CD8-positive, alpha-beta T cell (primary cell): ENCODE measurements at regions of chr9 and their contacts with region 1.

Region 1: DNA sequence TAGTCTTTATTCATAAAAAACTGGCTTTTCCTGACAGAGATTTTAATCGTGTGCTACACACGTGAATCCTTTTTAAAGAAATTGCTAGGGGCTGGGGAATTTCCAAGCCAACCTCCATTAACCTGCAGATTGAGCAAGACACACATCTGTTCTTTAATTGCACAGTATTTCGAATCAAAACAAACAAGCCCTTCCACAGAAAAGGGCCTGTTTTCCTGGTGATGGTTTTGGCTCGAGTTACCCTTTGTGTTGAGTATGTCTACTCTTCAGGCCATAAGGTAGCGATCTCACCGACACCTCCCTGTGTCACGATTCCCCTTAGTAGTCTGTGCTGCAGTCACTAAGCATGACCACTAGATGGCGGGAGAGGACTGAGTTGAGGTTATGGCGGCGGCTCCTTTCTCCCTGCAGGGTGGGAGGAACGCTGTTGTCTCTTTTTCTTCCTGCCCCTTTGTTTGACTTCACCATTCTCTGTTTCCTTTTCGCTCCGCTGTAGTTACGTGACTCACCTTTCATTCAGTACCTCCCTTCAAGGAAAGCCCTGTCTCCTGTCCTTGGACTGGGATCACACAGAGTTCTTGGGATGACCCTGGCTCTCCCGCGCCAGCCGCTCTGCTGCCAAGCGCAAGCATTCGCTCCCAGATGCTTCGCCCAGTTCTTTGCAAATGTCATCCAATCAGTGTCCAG is 137.1 kb upstream of the SLC24A2 start:
- DNase-seq: peak; percentile 61 to 87 (median 78)
- ATAC-seq: peak; percentile 100
- H3K4me3 ChIP-seq: peak overlapping the region in 1 of 2 experiments; percentile 26
- H3K4me3 Mint-ChIP-seq: peak overlapping the region; percentile 59
- H3K27ac ChIP-seq: no peak overlapping the region
- H3K27ac Mint-ChIP-seq: no peak overlapping the region
- H3K4me1 ChIP-seq: peaks cover 4% of the 10 kb centered on the region
- H3K4me1 Mint-ChIP-seq: peaks cover 8% of the 10 kb centered on the region
- H3K27me3 ChIP-seq: no peaks in the 10 kb centered on the region
- H3K27me3 Mint-ChIP-seq: peaks cover 9% of the 10 kb centered on the region
- CTCF ChIP-seq: peak; percentile 87

Region 2: DNA sequence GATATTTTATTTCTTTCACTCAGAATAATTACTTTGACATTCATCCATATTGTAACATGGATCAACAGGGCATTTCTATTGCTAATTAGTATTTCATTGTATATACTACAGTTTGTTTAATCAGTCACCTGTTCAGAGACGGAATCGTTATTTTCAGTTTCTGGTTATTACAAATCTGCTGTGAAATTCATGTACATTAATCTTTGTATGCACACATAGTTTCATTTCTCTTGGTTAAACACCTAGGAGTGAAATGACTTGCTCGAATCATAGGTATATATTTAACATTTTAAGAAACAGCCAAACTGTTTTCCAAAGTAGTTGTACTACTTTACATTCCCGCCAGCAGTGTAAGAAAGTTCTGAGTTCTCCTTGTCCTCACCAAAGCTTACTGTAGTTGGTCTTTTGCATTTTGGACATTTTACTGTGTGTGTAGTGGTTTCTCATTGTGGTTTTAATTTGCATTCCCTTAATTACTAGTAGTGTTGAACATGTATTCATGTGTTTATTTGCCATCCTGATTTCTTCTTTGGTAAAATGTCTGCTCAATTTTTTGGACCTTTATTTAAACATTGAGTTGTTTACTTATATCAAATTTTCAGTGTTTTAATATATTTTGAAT is 1091.1 kb before region 1 on chr9:
- CTCF ChIA-PET with region 1: no interaction called
- POLR2A ChIA-PET with region 1: no interaction called
- intact Hi-C with region 1: no loop called
- DNase-seq: no peak
- ATAC-seq: no peak
- H3K4me3 ChIP-seq: no peak overlapping the region
- H3K4me3 Mint-ChIP-seq: no peak overlapping the region
- H3K27ac ChIP-seq: no peak overlapping the region
- H3K27ac Mint-ChIP-seq: no peak overlapping the region
- H3K4me1 ChIP-seq: no peaks in the 10 kb centered on the region
- H3K4me1 Mint-ChIP-seq: no peaks in the 10 kb centered on the region
- H3K27me3 ChIP-seq: no peaks in the 10 kb centered on the region
- H3K27me3 Mint-ChIP-seq: no peaks in the 10 kb centered on the region
- CTCF ChIP-seq: no peak

Region 3: DNA sequence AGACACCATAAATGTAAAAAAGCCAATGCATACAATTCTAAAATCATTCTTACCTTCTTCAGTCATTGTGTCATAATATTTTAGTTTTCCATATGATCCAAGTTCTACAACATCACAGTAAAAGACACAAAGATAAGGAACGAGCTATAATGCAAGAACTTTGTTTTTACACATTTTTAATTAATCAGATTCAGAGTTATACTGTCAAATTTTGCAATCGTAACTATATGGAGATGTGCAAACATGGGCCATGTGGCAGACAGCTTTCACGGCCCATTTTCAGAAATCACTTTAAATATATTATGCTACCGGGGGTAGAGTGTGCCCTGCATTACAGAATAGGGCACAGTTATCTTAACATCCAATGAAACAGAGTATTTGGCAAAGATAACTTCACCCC is 328.8 kb before region 1 on chr9:
- CTCF ChIA-PET with region 1: no interaction called
- POLR2A ChIA-PET with region 1: no interaction called
- intact Hi-C with region 1: no loop called
- DNase-seq: no peak
- ATAC-seq: no peak
- H3K4me3 ChIP-seq: no peak overlapping the region
- H3K4me3 Mint-ChIP-seq: no peak overlapping the region
- H3K27ac ChIP-seq: no peak overlapping the region
- H3K27ac Mint-ChIP-seq: no peak overlapping the region
- H3K4me1 ChIP-seq: no peaks in the 10 kb centered on the region
- H3K4me1 Mint-ChIP-seq: no peaks in the 10 kb centered on the region
- H3K27me3 ChIP-seq: no peaks in the 10 kb centered on the region
- H3K27me3 Mint-ChIP-seq: peaks cover 16% of the 10 kb centered on the region
- CTCF ChIP-seq: no peak

Region 4: DNA sequence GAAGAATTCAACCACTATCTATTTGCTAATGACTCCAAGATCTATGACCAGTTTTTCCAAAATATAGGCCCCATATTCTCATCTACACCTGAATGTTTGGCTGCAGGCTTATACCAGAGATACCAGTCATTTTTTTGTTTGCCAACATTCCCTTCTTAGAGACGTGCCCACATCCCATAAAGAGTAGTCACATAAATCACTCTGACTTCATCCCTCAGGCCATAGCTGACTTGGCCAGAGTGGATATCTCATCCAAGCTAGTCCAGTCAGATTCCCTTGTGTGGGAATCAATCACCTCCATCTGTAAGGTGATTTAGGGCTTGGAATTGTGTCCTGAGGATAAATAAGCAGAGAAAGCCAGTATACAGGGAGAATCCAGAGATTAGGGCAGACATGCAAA is 12.8 kb before region 1 on chr9:
- CTCF ChIA-PET with region 1: no interaction called
- POLR2A ChIA-PET with region 1: no interaction called
- intact Hi-C with region 1: no loop called
- DNase-seq: no peak
- ATAC-seq: no peak
- H3K4me3 ChIP-seq: no peak overlapping the region
- H3K4me3 Mint-ChIP-seq: no peak overlapping the region
- H3K27ac ChIP-seq: no peak overlapping the region
- H3K27ac Mint-ChIP-seq: no peak overlapping the region
- H3K4me1 ChIP-seq: no peaks in the 10 kb centered on the region
- H3K4me1 Mint-ChIP-seq: no peaks in the 10 kb centered on the region
- H3K27me3 ChIP-seq: no peaks in the 10 kb centered on the region
- H3K27me3 Mint-ChIP-seq: no peaks in the 10 kb centered on the region
- CTCF ChIP-seq: no peak

Region 5: GRCh38 chr9:20242510-20243189 is 316.7 kb after region 1 on chr9:
- CTCF ChIA-PET with region 1: interaction called, 3 read pairs
- POLR2A ChIA-PET with region 1: no interaction called
- intact Hi-C with region 1: loop called in 1 of 2 experiments (anchors 10 kb)
- DNase-seq: peak in 7 of 9 experiments; percentile 8 to 74 (median 20)
- ATAC-seq: peak; percentile 75
- H3K4me3 ChIP-seq: peak overlapping the region in 1 of 2 experiments; percentile 22
- H3K4me3 Mint-ChIP-seq: peak overlapping the region; percentile 71
- H3K27ac ChIP-seq: peak overlapping the region in 1 of 2 experiments; percentile 50
- H3K27ac Mint-ChIP-seq: peak overlapping the region; percentile 60
- H3K4me1 ChIP-seq: peaks cover 35% of the 10 kb centered on the region
- H3K4me1 Mint-ChIP-seq: peaks cover 57% of the 10 kb centered on the region
- H3K27me3 ChIP-seq: no peaks in the 10 kb centered on the region
- H3K27me3 Mint-ChIP-seq: no peaks in the 10 kb centered on the region
- CTCF ChIP-seq: no peak

Region 6: GRCh38 chr9:20361656-20362570 is 436.0 kb after region 1 on chr9:
- CTCF ChIA-PET with region 1: interaction called, 3 read pairs
- POLR2A ChIA-PET with region 1: no interaction called
- intact Hi-C with region 1: loop called in 1 of 2 experiments (anchors 5 kb)
- DNase-seq: no peak
- ATAC-seq: peak; percentile 64
- H3K4me3 ChIP-seq: no peak overlapping the region
- H3K4me3 Mint-ChIP-seq: peak overlapping the region; percentile 23
- H3K27ac ChIP-seq: no peak overlapping the region
- H3K27ac Mint-ChIP-seq: peak overlapping the region; percentile 23
- H3K4me1 ChIP-seq: peaks cover 13% of the 10 kb centered on the region
- H3K4me1 Mint-ChIP-seq: peaks cover 46% of the 10 kb centered on the region
- H3K27me3 ChIP-seq: no peaks in the 10 kb centered on the region
- H3K27me3 Mint-ChIP-seq: no peaks in the 10 kb centered on the region
- CTCF ChIP-seq: no peak

Region 7: GRCh38 chr9:20558566-20559016 is 632.6 kb after region 1 on chr9:
- CTCF ChIA-PET with region 1: no interaction called
- POLR2A ChIA-PET with region 1: no interaction called
- intact Hi-C with region 1: loop called in 1 of 2 experiments (anchors 10 kb)
- DNase-seq: no peak
- ATAC-seq: peak; percentile 23
- H3K4me3 ChIP-seq: no peak overlapping the region
- H3K4me3 Mint-ChIP-seq: no peak overlapping the region
- H3K27ac ChIP-seq: no peak overlapping the region
- H3K27ac Mint-ChIP-seq: no peak overlapping the region
- H3K4me1 ChIP-seq: peaks cover 48% of the 10 kb centered on the region
- H3K4me1 Mint-ChIP-seq: peaks cover 88% of the 10 kb centered on the region
- H3K27me3 ChIP-seq: no peaks in the 10 kb centered on the region
- H3K27me3 Mint-ChIP-seq: no peaks in the 10 kb centered on the region
- CTCF ChIP-seq: no peak

Region 8: DNA sequence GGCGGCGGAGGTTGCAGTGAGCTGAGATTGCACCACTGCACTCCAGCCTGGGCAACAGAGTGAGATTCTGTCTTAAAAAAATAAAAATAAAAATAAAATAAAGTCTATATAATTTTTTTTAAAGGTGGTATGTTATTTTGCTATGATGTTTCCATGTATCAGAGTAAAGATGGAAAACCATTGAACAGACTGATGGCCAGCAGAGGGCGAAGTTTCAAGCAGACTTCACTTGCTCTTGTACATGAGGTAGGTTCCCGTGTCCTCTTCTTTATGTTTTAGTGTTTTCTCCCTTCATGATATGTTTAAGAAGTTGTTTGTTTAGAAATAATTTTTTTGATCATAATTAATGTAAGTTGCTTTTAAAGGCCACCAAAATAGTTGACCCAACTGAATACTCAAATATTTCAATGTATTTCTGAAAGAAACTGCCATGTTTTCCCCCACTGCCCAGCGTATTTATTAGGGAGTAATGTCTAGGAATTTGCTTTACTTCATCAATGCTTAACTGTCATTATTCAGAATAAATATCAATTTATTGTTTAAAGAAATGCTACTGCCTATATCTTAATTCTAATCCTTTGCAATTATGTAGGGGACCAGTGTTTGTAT is 959.1 kb after region 1 on chr9:
- CTCF ChIA-PET with region 1: interaction called, 4 read pairs
- POLR2A ChIA-PET with region 1: no interaction called
- intact Hi-C with region 1: loop called (anchors 2 to 5 kb)
- DNase-seq: peak; percentile 37 to 72 (median 58)
- ATAC-seq: peak; percentile 44
- H3K4me3 ChIP-seq: no peak overlapping the region
- H3K4me3 Mint-ChIP-seq: no peak overlapping the region
- H3K27ac ChIP-seq: no peak overlapping the region
- H3K27ac Mint-ChIP-seq: no peak overlapping the region
- H3K4me1 ChIP-seq: no peaks in the 10 kb centered on the region
- H3K4me1 Mint-ChIP-seq: no peaks in the 10 kb centered on the region
- H3K27me3 ChIP-seq: no peaks in the 10 kb centered on the region
- H3K27me3 Mint-ChIP-seq: no peaks in the 10 kb centered on the region
- CTCF ChIP-seq: peak; percentile 76

Region 9: GRCh38 chr9:21395778-21396717 is 1470.1 kb after region 1 on chr9:
- CTCF ChIA-PET with region 1: no interaction called
- POLR2A ChIA-PET with region 1: no interaction called
- intact Hi-C with region 1: loop called in 1 of 2 experiments (anchors 10 kb)
- DNase-seq: peak; percentile 26 to 79 (median 65)
- ATAC-seq: peak; percentile 74
- H3K4me3 ChIP-seq: peak overlapping the region; percentile 40 to 52
- H3K4me3 Mint-ChIP-seq: peak overlapping the region; percentile 65
- H3K27ac ChIP-seq: no peak overlapping the region
- H3K27ac Mint-ChIP-seq: no peak overlapping the region
- H3K4me1 ChIP-seq: peaks cover 4% of the 10 kb centered on the region
- H3K4me1 Mint-ChIP-seq: peaks cover 5% of the 10 kb centered on the region
- H3K27me3 ChIP-seq: peaks cover 5 to 7% of the 10 kb centered on the region in 2 experiments
- H3K27me3 Mint-ChIP-seq: peaks cover 55% of the 10 kb centered on the region
- CTCF ChIP-seq: peak; percentile 81